ENCODE measurements at regions of chr7 and their contacts with region 1.

Region 1: GRCh38 chr7:78924581-78924980 is 528.9 kb downstream of the MAGI2 start:
- DNase-seq: peak; percentile 4
- H3K4me3 ChIP-seq: no peak overlapping the region
- H3K27ac ChIP-seq: no peak overlapping the region
- H3K4me1 ChIP-seq: no peaks in the 10 kb centered on the region
- H3K27me3 ChIP-seq: no peaks in the 10 kb centered on the region
- CTCF ChIP-seq: peak; percentile 24 to 39

Region 2: DNA sequence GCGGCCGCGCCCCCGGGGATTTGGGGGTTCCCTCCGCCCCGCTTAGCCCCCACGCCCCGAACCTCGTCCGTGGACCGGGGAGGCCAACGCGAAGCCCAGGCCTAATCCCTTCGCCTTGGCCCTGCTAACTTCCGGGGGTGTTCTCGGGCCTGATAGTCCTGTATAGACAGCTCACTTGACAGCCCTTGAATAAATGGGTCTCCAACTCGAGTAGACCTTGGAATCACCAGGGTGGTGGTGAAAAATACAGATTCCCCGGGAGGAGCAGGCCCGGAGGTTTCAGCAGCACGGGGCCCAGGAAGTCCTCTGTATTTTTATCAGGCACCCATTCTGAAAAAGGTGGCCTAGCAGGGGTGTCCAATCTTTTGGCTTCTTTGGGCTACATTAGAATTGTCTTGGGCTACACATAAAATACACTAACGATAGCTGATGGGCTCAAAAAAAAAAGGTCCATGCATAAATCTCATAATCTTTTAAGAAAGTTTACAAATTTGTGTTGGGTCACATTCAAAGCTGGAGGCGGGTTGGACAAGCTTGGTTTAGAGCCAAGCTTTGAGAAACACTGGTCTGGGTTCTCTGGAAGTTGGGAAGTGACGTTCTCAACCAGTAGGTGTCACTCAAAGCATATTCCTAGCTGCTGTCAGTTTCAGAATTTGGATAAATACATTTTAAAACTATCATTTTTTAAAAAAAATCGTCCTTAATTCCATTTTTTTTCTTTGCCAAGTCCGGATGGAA is 904.3 kb before region 1 on chr7:
- CTCF ChIA-PET with region 1: no interaction called
- dilution Hi-C with region 1: no loop called
- in situ Hi-C with region 1: no loop called
- intact Hi-C with region 1: loop called (anchors 2 kb)
- DNase-seq: peak; percentile 60
- H3K4me3 ChIP-seq: peak overlapping the region in 1 of 3 experiments; percentile 53
- H3K27ac ChIP-seq: no peak overlapping the region
- H3K4me1 ChIP-seq: peaks cover 7% of the 10 kb centered on the region
- H3K27me3 ChIP-seq: peaks cover under 1% of the 10 kb centered on the region
- CTCF ChIP-seq: peak; percentile 65 to 77

Region 3: DNA sequence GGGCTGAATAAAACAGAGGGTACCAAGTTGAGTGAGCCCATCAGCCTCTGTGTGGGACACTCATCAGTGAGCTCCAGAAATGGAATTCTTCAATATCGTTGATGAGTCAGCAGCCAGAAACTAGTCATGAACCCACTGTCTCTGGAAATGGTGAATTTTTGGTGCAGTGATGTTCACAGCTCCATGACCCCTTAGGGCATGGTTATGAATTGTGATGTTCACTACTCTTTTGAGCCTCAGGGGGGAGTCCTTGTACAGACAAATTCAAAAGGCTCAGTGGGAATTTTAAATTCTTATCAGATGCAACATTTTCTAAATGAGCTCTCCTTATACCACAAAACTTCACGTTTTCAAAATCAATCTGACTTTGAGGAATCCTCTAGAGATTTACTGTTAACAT is 790.3 kb before region 1 on chr7:
- CTCF ChIA-PET with region 1: no interaction called
- dilution Hi-C with region 1: no loop called
- in situ Hi-C with region 1: no loop called
- intact Hi-C with region 1: loop called (anchors 10 kb)
- DNase-seq: peak; percentile 23
- H3K4me3 ChIP-seq: no peak overlapping the region
- H3K27ac ChIP-seq: no peak overlapping the region
- H3K4me1 ChIP-seq: no peaks in the 10 kb centered on the region
- H3K27me3 ChIP-seq: no peaks in the 10 kb centered on the region
- CTCF ChIP-seq: peak; percentile 47 to 50

Region 4: GRCh38 chr7:78510580-78511188 is 413.9 kb before region 1 on chr7:
- CTCF ChIA-PET with region 1: no interaction called
- dilution Hi-C with region 1: no loop called
- in situ Hi-C with region 1: loop called in 1 of 2 experiments (anchors 25 kb)
- intact Hi-C with region 1: loop called (anchors 1 kb)
- DNase-seq: peak; percentile 15
- H3K4me3 ChIP-seq: no peak overlapping the region
- H3K27ac ChIP-seq: no peak overlapping the region
- H3K4me1 ChIP-seq: no peaks in the 10 kb centered on the region
- H3K27me3 ChIP-seq: no peaks in the 10 kb centered on the region
- CTCF ChIP-seq: peak; percentile 82 to 90

Region 5: DNA sequence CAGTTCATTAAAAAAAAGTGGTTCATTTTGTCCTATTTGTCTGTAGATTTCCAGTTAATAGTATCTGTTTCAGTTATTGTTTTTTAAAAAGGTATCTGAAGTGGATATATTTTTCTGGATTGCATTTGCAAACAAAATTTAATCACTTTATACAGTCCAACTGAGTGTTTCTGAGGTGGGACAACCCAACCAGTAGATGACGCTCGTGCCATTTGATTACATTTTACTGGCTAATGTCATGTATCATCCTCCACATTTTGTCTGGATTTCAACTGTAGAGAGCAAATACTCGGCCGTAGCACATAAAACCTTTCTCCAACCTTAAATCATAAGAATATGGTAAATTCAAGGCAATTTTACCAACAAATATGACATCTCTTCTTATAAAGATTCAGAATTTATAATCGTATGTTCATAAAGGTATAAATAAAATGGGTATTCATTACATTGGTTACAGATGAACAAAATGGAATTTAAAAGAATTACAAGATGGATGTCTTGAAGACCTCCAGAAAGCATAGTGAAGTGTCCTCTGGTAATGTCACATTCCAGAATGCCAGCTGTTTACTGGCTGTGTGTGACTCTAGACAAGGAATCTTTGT is 337.0 kb before region 1 on chr7:
- CTCF ChIA-PET with region 1: no interaction called
- dilution Hi-C with region 1: no loop called
- in situ Hi-C with region 1: loop called in 1 of 2 experiments (anchors 25 kb)
- intact Hi-C with region 1: loop called (anchors 1 kb)
- DNase-seq: no peak
- H3K4me3 ChIP-seq: no peak overlapping the region
- H3K27ac ChIP-seq: no peak overlapping the region
- H3K4me1 ChIP-seq: no peaks in the 10 kb centered on the region
- H3K27me3 ChIP-seq: peaks cover 3% of the 10 kb centered on the region
- CTCF ChIP-seq: peak; percentile 52 to 56

Region 6: DNA sequence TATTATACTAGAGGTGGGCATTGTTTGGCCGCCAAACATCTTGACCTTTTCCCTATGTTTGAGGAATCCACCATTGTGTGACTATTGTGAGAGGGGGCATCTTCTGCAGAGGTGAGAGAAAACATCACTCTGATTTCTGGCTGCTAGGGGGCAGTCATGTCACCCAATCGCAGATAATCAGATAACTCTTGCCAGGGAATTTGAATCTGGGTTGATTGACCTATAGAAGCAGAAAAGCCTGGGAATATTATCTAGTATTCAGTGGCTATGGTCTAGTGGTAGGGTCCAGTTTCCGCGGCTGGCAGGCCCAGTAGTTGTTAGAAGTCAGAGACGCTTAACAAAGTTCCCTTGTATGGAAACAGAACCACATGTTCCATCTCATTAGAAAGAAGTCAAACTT is 317.5 kb before region 1 on chr7:
- CTCF ChIA-PET with region 1: no interaction called
- dilution Hi-C with region 1: no loop called
- in situ Hi-C with region 1: no loop called
- intact Hi-C with region 1: loop called (anchors 1 kb)
- DNase-seq: no peak
- H3K4me3 ChIP-seq: no peak overlapping the region
- H3K27ac ChIP-seq: no peak overlapping the region
- H3K4me1 ChIP-seq: no peaks in the 10 kb centered on the region
- H3K27me3 ChIP-seq: no peaks in the 10 kb centered on the region
- CTCF ChIP-seq: peak; percentile 37 to 59

Region 7: DNA sequence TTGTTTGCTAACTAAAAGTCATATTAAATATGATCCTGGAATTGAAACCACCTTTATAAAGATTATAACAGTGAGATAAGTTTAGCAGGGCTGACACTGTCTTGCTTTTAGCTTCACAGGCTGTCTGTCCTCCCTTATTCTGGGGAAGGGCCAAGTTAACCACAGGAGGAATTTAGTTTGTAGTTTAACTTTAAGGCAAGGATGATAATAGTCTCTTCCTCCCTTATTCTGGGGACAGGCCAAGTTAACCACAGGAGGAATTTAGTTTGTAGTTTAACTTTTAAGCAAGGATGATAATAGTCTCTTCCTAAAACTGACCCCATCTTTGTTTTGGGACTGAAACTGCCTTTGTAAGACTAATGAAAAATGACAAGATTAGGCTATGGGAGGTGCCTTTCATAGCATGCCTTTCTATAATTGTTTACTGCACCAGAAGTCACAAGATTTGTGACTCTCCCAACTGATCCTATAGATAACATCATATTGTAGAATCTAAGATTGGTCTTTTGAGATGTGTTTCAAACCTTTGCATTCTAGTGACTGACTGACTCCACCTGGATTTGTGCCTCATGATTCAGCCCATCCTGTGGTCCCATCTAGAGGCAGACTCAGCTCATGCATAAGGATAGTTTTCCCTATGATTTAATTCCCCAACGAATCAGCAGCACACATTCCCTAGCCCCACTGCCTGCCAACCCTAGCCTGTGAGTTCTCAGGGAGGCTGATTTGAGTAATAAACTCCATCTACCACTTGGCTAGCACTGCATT is 316.9 kb after region 1 on chr7:
- CTCF ChIA-PET with region 1: no interaction called
- dilution Hi-C with region 1: no loop called
- in situ Hi-C with region 1: no loop called
- intact Hi-C with region 1: loop called (anchors 10 kb)
- DNase-seq: peak; percentile 23
- H3K4me3 ChIP-seq: no peak overlapping the region
- H3K27ac ChIP-seq: no peak overlapping the region
- H3K4me1 ChIP-seq: no peaks in the 10 kb centered on the region
- H3K27me3 ChIP-seq: no peaks in the 10 kb centered on the region
- CTCF ChIP-seq: peak; percentile 6 to 19